PC-9 (cell line): ENCODE measurements at regions of chr2 and their contacts with region 1.

Region 1: DNA sequence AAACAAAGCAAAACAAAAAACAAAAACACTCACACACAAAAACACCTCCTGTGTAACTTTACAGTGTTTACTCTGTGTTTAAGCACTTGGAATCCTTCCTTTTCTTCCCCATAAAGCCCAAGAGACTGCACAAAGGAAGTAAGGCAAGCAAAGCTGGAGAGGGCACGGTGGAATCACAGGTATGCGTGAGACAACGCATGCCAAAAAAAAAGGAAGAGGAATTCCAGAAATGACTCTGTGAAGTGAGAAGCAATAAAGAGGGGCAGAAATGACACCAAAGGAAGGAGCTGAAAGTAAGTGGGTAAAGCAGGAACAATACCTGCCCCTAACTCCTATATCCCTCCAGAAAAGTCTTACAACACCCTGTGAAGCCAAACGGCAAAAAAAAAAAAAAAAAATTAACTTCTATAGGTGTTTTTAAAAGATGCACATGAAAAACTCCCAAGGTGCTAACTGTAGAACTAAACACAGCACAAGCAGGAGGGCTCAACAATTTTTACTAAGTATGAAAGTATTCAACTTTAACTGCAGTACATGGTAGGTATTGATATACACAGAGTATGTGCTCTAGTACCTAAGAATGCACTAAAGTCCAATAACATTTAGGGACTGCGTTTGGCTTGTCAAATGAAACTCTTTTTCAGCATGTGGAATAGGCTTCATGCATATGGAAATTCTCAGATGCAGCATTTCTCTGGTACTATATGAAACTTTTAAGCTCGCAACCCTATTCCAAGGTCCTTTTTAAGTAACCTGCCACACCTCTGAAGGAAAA is 9.1 kb downstream of the RND3 start:
- DNase-seq: peak; percentile 63 to 79
- H3K4me3 ChIP-seq: peak overlapping the region; percentile 34; the same call in 1 of the 2 replicates
- H3K27ac ChIP-seq: peak overlapping the region; percentile 93
- H3K4me1 ChIP-seq: peaks cover 100% of the 10 kb centered on the region
- H3K27me3 ChIP-seq: no peaks in the 10 kb centered on the region
- CTCF ChIP-seq: no peak

Region 2: GRCh38 chr2:149920389-149920788 is 558.0 kb before region 1 on chr2:
- CTCF ChIA-PET with region 1: no interaction called
- POLR2A ChIA-PET with region 1: interaction called, 32 read pairs
- intact Hi-C with region 1: no loop called
- DNase-seq: no peak
- H3K4me3 ChIP-seq: no peak overlapping the region
- H3K27ac ChIP-seq: no peak overlapping the region
- H3K4me1 ChIP-seq: no peaks in the 10 kb centered on the region
- H3K27me3 ChIP-seq: no peaks in the 10 kb centered on the region
- CTCF ChIP-seq: no peak

Region 3: DNA sequence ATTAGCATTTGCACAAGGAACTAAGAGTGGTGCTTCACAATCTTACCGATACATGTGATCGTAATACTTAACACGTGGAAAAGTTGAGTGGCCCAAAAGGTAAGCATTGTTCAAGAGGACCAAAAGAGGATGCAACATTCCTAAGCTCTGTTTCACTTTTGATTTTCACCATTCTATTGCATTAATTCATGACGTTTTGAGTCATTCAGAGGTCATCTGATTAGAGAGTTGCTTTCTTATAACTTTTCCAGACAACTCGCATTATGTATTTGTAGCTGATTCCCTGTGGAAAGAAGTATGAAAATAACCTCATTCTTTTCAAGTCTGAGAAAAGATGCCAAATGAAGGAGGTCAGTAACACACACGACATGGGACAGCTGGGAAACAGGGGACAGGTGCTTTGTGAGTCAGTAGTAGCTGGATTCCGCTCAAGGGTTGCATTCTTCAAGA is 335.3 kb before region 1 on chr2:
- CTCF ChIA-PET with region 1: no interaction called
- POLR2A ChIA-PET with region 1: interaction called, 6 read pairs
- intact Hi-C with region 1: loop called (anchors 2 kb)
- DNase-seq: peak; percentile 22 to 70
- H3K4me3 ChIP-seq: no peak overlapping the region
- H3K27ac ChIP-seq: peak overlapping the region; percentile 94
- H3K4me1 ChIP-seq: peaks cover 22% of the 10 kb centered on the region
- H3K27me3 ChIP-seq: no peaks in the 10 kb centered on the region
- CTCF ChIP-seq: no peak

Region 4: DNA sequence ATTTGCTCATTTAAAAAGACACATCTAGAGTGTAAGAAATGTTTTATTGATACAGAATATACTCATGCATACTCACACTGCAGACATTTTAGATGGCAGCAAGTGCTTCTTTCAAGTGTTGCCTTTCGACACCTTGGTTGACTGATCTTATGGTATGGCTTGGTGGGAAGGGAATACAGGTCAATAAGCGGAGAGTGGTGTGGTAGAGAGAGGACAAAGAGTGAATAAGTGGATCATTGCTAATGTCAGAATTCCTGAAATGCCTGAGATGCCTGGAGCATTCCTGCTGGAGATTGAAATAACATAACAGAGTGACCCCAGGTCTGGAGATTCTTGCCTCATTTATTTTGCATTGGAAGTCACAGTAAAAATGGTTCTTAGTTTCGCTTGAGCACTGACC is 67.6 kb before region 1 on chr2:
- CTCF ChIA-PET with region 1: no interaction called
- POLR2A ChIA-PET with region 1: interaction called, 3 read pairs
- intact Hi-C with region 1: loop called (anchors 2 kb)
- DNase-seq: peak; percentile 28 to 43
- H3K4me3 ChIP-seq: no peak overlapping the region
- H3K27ac ChIP-seq: no peak overlapping the region
- H3K4me1 ChIP-seq: no peaks in the 10 kb centered on the region
- H3K27me3 ChIP-seq: no peaks in the 10 kb centered on the region
- CTCF ChIP-seq: no peak

Region 5: GRCh38 chr2:150750720-150751119 is 272.3 kb after region 1 on chr2:
- CTCF ChIA-PET with region 1: no interaction called
- POLR2A ChIA-PET with region 1: interaction called, 16 read pairs
- intact Hi-C with region 1: no loop called
- DNase-seq: no peak
- H3K4me3 ChIP-seq: no peak overlapping the region
- H3K27ac ChIP-seq: no peak overlapping the region
- H3K4me1 ChIP-seq: no peaks in the 10 kb centered on the region
- H3K27me3 ChIP-seq: no peaks in the 10 kb centered on the region
- CTCF ChIP-seq: no peak